ENCODE measurements at regions of chr3 and their contacts with region 1.

Region 1: DNA sequence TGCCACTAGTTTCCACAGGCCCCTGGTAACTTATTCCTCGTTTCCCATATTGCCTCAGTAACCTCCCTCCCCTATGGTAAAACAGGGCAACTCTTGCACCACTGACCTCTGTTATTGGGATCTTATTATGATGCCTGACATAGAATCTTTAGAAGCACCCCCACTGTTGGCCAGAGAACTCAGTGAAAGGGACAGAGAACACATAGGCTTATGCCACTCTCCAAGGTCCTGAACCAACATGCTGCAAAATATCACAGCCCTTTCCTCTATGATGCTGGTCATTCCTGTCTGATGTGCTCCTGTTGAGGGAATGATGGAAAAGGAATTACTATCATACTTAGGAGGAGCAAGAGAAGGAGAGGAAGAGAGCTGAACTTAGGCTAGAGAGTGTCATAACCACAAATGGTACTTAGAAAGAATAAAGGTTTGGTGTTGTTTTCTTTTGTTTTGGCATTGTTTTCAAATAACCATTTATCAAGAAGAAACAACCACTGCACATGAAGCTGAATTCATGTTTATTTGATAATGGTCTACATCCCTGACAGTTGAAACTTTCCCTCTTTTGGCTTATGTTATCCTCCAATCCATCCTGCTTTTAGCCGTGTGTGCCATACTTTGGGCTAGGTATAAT is 330.2 kb downstream of the EPHB1 start:
- DNase-seq: no peak
- ATAC-seq: no peak
- H3K4me3 ChIP-seq: no peak overlapping the region
- H3K27ac ChIP-seq: no peak overlapping the region
- H3K4me1 ChIP-seq: no peaks in the 10 kb centered on the region
- H3K27me3 ChIP-seq: no peaks in the 10 kb centered on the region; the same call in 1 of the 2 replicates
- CTCF ChIP-seq: no peak
- POLR2A ChIP-seq: no peak
- RAD21 ChIP-seq: no peak

Region 2: DNA sequence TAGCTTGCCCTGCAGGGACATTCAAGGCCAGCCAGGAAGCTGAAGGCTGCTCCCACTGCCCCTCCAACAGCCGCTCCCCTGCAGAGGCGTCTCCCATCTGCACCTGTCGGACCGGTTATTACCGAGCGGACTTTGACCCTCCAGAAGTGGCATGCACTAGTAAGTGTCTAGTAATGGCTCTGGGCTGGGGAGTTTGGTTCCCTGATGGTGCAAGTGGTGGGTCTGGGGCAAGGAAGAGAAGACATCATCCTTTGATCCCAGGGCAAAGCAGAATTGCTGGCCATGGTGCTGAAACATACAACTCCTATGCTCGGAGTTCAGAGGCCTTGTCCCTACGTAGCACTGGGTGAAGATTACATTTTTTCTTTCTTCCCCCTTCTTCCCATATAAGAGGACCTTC is 18.8 kb before region 1 on chr3:
- CTCF ChIA-PET with region 1: no interaction called
- POLR2A ChIA-PET with region 1: no interaction called
- RAD21 ChIA-PET with region 1: no interaction called
- intact Hi-C with region 1: loop called (anchors 2 kb)
- DNase-seq: no peak
- ATAC-seq: no peak
- H3K4me3 ChIP-seq: no peak overlapping the region
- H3K27ac ChIP-seq: no peak overlapping the region
- H3K4me1 ChIP-seq: no peaks in the 10 kb centered on the region
- H3K27me3 ChIP-seq: no peaks in the 10 kb centered on the region
- CTCF ChIP-seq: no peak
- POLR2A ChIP-seq: no peak
- RAD21 ChIP-seq: no peak